ENCODE measurements at regions of chr6 and their contacts with region 1.

Region 1: DNA sequence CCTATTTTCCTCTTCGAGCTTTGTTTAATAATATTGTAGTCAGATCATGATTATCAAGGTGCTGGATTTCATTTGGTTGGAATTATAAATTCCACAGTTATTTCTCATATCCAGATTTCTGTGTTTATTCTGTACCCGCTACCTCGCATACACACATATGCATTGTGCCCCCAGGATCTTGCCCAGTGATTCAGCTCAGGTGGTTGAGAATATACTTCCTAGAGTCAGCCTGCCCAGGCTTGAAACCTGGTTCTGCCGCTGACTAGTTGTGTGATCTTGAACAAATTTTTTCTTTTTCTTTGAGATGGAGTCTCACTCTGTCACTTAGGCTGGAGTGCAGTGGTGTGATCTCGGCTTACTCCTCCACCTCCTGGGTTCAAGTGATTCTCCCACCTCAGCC is 14.7 kb downstream of the GINM1 start:
- DNase-seq: no peak
- H3K4me3 ChIP-seq: no peak overlapping the region
- H3K27ac ChIP-seq: no peak overlapping the region
- H3K27me3 ChIP-seq: no peaks in the 10 kb centered on the region
- CTCF ChIP-seq: no peak

Region 2: GRCh38 chr6:149108038-149108748 is 472.7 kb before region 1 on chr6:
- CTCF ChIA-PET with region 1: no interaction called
- POLR2A ChIA-PET with region 1: interaction called, 14 read pairs
- DNase-seq: no peak
- H3K4me3 ChIP-seq: no peak overlapping the region
- H3K27ac ChIP-seq: no peak overlapping the region
- H3K27me3 ChIP-seq: no peaks in the 10 kb centered on the region
- CTCF ChIP-seq: no peak